Posterior cingulate gyrus (tissue), 11 donors: ENCODE measurements at regions of chr1 and their contacts with region 1.

Region 1: GRCh38 chr1:212455803-212456528 is 23.2 kb downstream of the NENF start:
- DNase-seq: peak; percentile 88 to 99 (median 97)

Region 2: GRCh38 chr1:212062832-212063438 is 393.0 kb before region 1 on chr1:
- intact Hi-C with region 1: loop called (anchors 2 kb)
- DNase-seq: peak in 1 of 10 donors; percentile 43

Region 3: GRCh38 chr1:212284744-212285684 is 171.0 kb before region 1 on chr1 and contains the start of gene PPP2R5A:
- intact Hi-C with region 1: loop called (anchors 5 kb)
- DNase-seq: peak; percentile 97 to 100 (median 99)

Region 4: DNA sequence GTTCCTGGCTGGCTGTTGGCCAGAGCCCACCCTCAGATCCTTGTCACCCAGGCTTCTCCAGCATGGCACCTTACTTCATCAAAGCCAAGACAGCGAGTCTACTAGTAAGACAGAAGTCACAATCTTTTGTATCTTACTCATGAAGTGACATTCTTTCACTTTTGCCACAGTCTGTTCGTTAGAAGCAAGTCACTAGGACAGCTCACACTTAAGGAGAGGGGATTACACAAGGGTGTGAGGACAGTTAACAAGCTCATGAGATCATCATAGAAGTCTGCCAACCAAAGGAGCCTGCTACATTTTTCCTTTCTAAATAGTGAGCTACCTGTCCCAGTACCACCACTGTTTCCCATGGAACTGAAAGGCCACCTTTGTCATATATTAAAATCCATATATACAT is 102.8 kb before region 1 on chr1:
- intact Hi-C with region 1: no loop called
- DNase-seq: no peak

Region 5: DNA sequence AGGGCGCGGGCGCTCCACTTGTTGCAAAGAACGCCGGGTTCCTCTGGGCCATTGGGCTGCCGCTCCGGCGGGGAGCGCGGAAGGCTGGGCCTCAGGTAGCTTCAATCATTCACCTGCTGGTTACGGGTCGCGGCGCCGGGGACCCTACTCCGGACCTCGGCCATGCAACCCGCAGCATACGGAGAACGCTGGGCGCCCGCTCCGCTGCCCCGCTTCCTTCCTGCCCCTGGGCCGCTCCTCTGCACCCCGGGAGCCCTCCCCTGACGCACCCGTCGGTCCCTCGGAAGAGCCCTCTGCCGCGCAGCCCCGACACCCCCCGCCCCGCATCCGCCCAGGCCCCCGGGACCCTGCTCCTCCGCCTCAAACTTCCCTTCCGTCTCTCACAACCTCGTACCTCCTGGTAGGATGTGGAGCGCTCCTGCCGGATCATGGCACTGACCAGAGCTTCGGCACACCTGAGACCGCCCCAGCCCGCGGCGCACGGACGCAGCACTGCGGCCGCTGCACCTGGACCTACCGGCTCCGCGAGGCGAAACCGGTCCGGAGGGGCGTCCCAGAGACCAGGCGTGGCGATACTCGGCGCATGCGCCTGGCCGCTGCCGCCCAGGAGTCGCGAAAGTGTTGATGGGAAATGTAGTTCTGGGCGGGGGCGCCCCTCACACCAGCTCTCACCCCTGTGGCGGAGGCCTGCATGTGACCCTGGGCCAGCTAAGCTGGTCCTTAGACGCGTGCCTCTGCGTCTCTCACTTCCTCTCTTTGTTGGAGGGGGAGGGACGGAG is 41.4 kb before region 1 on chr1 and contains the start of gene PACC1:
- intact Hi-C with region 1: loop called (anchors 5 kb)
- DNase-seq: peak; percentile 83 to 98 (median 88)

Region 6: DNA sequence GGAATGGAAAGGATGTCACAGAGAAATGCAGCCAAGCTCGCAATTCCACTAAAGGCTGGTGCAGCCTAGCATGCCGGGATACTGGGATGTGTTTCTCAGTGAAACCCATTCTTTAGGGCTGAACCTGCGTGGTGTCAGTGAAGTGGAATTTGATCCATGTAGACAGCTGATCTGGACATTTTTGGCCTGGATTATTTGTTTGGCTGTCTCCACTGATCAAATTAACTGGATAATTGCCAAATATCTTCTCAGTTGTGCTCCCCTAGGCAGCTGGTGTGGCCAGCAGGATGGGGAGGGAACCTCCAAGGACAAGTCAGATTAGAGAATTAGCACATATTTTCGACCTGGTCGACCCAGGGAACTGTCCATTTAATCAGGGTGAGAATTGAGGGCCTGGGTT is 913.5 kb after region 1 on chr1:
- intact Hi-C with region 1: no loop called
- DNase-seq: no peak